ENCODE measurements at regions of chr17 and their contacts with region 1.

Region 1: GRCh38 chr17:33949100-33949499 is 306.0 kb upstream of the CCL2 start:
- DNase-seq: no peak
- ATAC-seq: no peak

Region 2: DNA sequence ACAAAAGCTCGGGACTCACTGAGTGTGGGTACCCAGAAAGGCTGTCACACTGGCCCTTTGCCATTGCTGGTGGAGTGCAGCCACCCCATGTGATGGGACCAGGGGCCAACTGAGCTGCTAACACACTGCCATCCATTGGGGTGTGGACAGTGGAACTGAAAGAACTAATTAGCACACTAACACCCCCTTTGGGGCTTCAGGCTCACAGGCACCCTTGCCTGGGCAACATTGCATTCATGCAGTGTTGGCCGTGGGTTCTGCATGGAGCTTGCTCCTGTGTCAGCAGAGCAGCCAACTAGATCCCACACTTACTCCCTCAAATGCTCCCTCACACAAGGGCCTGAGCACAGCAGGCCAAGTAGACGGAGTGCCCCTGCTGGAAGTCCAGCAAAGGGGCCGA is 180.0 kb before region 1 on chr17:
- intact Hi-C with region 1: no loop called
- DNase-seq: no peak
- ATAC-seq: no peak

Region 3: DNA sequence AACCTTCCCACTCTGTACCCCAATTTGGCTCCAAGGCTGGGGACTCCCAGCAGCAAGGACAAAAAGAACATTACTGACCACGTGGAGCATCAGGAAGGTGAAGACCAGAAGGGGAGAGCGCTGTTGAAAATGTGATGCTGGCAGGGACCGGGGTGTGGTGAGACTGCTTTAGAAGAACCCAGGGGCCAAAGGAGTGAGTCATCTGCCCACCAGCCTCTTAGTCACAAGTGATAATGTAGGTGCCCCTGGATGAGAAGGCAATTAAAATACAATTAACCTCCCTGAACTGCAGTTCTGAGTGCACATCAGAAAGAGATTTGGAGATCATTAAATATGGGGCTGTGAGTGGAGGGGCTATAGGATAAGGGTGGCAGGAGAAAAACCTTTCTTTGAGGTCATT is 60.6 kb before region 1 on chr17:
- intact Hi-C with region 1: loop called (anchors 10 kb)
- DNase-seq: no peak
- ATAC-seq: no peak

Region 4: GRCh38 chr17:34009912-34010311 is 60.8 kb after region 1 on chr17:
- intact Hi-C with region 1: loop called (anchors 10 kb)
- DNase-seq: no peak
- ATAC-seq: no peak